CD4-positive, alpha-beta memory T cell (primary cell): ENCODE measurements at regions of chr7 and their contacts with region 1.

Region 1: GRCh38 chr7:76201730-76202665 is at the start of gene SRRM3:
- DNase-seq: peak; percentile 71 to 86 (median 81)
- H3K4me3 ChIP-seq: no peak within 1 kb of the TSS
- H3K4me3 Mint-ChIP-seq: no peak within 1 kb of the TSS
- H3K27ac ChIP-seq: no peak within 1 kb of the TSS
- H3K27ac Mint-ChIP-seq: no peak within 1 kb of the TSS
- H3K4me1 ChIP-seq: no peaks in the 10 kb centered on the region
- H3K4me1 Mint-ChIP-seq: no peaks in the 10 kb centered on the region
- H3K27me3 ChIP-seq: no peaks in the 10 kb centered on the region
- H3K27me3 Mint-ChIP-seq: peaks cover 18 to 21% of the 10 kb centered on the region in 2 donors
- total RNA-seq, gene SRRM3: not detected

Region 2: GRCh38 chr7:76179686-76180085 is 22.3 kb before region 1 on chr7:
- CTCF ChIA-PET with region 1: interaction called, 3 read pairs
- POLR2A ChIA-PET with region 1: no interaction called
- intact Hi-C with region 1: loop called (anchors 2 kb)
- DNase-seq: no peak
- H3K4me3 ChIP-seq: no peak overlapping the region
- H3K4me3 Mint-ChIP-seq: no peak overlapping the region
- H3K27ac ChIP-seq: no peak overlapping the region
- H3K27ac Mint-ChIP-seq: no peak overlapping the region
- H3K4me1 ChIP-seq: no peaks in the 10 kb centered on the region
- H3K4me1 Mint-ChIP-seq: peaks cover 0 to 6% (median 4%) of the 10 kb centered on the region in 4 donors
- H3K27me3 ChIP-seq: no peaks in the 10 kb centered on the region
- H3K27me3 Mint-ChIP-seq: peaks cover 0 to 3% of the 10 kb centered on the region in 2 donors